Thyroid gland (tissue), 4 donors: ENCODE measurements at regions of chr7 and their contacts with region 1.

Region 1: GRCh38 chr7:88357781-88358525 is 51.3 kb upstream of the STEAP4 start:
- DNase-seq: peak in 1 of 2 donors; percentile 8
- H3K4me3 ChIP-seq: no peak overlapping the region
- H3K27ac ChIP-seq: no peak overlapping the region
- H3K4me1 ChIP-seq: no peaks in the 10 kb centered on the region
- H3K27me3 ChIP-seq: no peaks in the 10 kb centered on the region
- CTCF ChIP-seq: peak; percentile 10 to 69 (median 54)
- POLR2A ChIP-seq: no peak

Region 2: DNA sequence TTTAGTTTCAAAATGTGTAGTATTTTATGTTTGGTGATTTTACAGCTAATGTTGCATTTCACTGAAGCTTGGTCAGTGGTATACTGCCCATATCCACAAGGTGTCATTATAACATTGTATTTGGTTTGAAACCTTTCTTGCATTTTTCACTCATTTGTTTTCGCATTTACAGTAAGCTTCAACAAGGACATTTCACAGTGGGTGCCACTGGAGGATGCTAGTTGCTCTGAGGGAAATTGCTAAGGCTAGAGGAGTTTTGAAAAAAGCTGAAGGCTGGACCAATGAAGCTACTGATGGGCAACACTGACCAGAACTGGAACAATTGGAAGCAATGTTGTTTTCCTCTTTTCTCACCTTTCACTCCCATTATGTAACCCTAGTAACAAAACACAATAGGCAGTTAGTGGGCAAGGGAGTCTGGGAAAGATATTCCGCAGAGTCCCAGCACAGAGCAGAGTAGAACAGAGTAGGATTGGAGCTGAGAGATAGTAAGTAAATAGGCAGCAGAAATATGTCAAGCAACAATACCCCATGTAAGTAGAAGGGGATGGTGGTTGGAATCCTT is 114.5 kb before region 1 on chr7:
- intact Hi-C with region 1: loop called (anchors 5 kb)
- DNase-seq: peak; percentile 9 to 24
- H3K4me3 ChIP-seq: no peak overlapping the region
- H3K27ac ChIP-seq: no peak overlapping the region
- H3K4me1 ChIP-seq: no peaks in the 10 kb centered on the region
- H3K27me3 ChIP-seq: no peaks in the 10 kb centered on the region
- CTCF ChIP-seq: peak; percentile 49 to 95 (median 82)
- POLR2A ChIP-seq: no peak

Region 3: DNA sequence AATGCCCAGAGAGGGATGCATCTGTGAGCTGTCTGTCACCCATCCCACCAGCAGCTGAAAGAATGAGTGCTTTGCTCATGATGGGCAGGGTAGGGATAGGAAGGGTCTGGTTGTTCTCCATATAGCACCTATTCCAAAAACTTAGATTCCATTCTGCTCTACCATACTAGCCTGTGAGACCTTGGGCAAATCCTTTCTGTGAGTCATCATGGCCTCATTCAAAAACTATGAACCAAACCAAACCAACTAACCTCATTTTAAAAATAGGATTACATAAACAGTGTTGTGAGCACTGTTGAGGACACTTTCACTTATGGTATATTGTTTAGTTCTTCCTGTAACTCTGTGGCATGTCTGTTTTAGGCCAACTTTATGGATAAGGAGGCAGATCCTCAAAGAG is 20.4 kb before region 1 on chr7:
- intact Hi-C with region 1: no loop called
- DNase-seq: no peak
- H3K4me3 ChIP-seq: no peak overlapping the region
- H3K27ac ChIP-seq: peak overlapping the region in 1 of 3 donors; percentile 85
- H3K4me1 ChIP-seq: peaks cover 8 to 14% of the 10 kb centered on the region in 2 donors
- H3K27me3 ChIP-seq: no peaks in the 10 kb centered on the region
- CTCF ChIP-seq: no peak
- POLR2A ChIP-seq: no peak